IMR-90 (cell line): ENCODE measurements at regions of chr2 and their contacts with region 1.

Region 1: GRCh38 chr2:30373881-30374302 is 73.2 kb upstream of the LCLAT1 start:
- DNase-seq: peak; percentile 89
- ATAC-seq: peak; percentile 87
- H3K4me3 ChIP-seq: no peak overlapping the region
- H3K27ac ChIP-seq: peak overlapping the region; percentile 40
- H3K4me1 ChIP-seq: peaks cover 14% of the 10 kb centered on the region
- H3K27me3 ChIP-seq: no peaks in the 10 kb centered on the region
- CTCF ChIP-seq: no peak
- POLR2A ChIP-seq: no peak
- RAD21 ChIP-seq: no peak; the same call in 1 of the 2 replicates

Region 2: DNA sequence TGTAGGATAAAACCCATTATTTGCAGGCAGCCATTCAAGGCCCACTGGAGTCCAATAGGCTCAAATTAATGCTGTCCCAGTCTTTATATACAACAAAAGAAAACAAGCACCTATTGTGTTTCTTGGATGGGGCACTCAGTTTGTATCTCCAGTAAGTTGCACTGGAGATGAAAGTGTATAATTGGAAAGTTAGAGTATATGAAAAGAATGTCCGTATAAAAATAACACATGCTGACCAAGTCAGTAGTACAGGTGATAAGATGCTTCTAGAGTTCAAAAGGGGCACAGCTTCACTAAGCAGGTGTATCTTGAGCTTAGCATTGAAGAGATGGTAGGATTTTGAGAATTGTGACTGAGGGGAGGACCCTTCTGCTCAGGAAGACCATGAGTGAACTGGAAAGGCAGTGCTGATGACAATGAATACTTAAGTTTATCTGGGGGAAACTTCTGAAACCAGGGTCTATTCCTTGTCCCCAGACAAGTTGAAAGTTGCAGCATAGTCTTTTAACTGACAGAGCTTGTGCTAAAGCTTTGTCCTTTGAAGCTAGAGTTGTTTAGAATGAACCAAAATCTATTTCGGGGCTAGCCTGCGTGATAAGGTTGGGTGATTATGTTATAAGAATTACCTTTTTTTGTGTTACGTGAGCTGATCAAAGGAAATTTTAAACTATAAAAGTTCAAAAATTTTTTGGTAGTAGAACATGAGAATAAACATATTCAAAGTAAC is 88.4 kb after region 1 on chr2:
- CTCF ChIA-PET with region 1: no interaction called
- POLR2A ChIA-PET with region 1: interaction called, 15 read pairs
- dilution Hi-C with region 1: no loop called
- in situ Hi-C with region 1: no loop called
- intact Hi-C with region 1: no loop called
- DNase-seq: no peak
- ATAC-seq: no peak
- H3K4me3 ChIP-seq: no peak overlapping the region
- H3K27ac ChIP-seq: no peak overlapping the region
- H3K4me1 ChIP-seq: peaks cover 6% of the 10 kb centered on the region
- H3K27me3 ChIP-seq: no peaks in the 10 kb centered on the region
- CTCF ChIP-seq: no peak
- POLR2A ChIP-seq: no peak
- RAD21 ChIP-seq: no peak

Region 3: DNA sequence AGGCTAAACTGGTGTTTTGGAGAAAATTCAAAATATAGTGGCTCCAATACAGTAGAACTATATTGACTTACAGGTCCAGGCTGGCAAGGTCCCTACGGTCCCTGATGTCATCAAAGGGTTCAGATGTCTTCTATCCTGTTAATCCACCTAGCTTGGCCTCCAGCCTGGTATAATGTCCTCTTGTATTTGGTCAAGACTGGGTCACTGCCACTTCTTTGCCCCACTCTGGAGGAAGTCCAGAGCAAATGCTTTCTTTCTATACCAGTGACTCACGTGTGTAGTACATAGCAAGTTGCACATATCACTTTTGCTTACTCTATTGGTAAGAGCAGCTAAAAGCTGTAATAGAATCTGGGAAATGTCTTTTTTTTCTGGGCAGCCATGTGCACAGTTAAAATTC is 154.0 kb after region 1 on chr2:
- CTCF ChIA-PET with region 1: no interaction called
- POLR2A ChIA-PET with region 1: no interaction called
- dilution Hi-C with region 1: no loop called
- in situ Hi-C with region 1: no loop called
- intact Hi-C with region 1: loop called (anchors 5 kb)
- DNase-seq: peak; percentile 52
- ATAC-seq: peak; percentile 79
- H3K4me3 ChIP-seq: no peak overlapping the region
- H3K27ac ChIP-seq: peak overlapping the region; percentile 43; the same call in 1 of the 2 replicates
- H3K4me1 ChIP-seq: peaks cover 2% of the 10 kb centered on the region
- H3K27me3 ChIP-seq: no peaks in the 10 kb centered on the region
- CTCF ChIP-seq: no peak
- POLR2A ChIP-seq: no peak
- RAD21 ChIP-seq: no peak